Testis (tissue), 5 donors: ENCODE measurements at regions of chr7 and their contacts with region 1.

Region 1: GRCh38 chr7:93601363-93601762 is 26.8 kb upstream of the CALCR start:
- DNase-seq: no peak
- H3K4me3 ChIP-seq: no peak overlapping the region
- H3K27ac ChIP-seq: no peak overlapping the region
- H3K4me1 ChIP-seq: no peaks in the 10 kb centered on the region
- H3K27me3 ChIP-seq: no peaks in the 10 kb centered on the region
- CTCF ChIP-seq: no peak
- POLR2A ChIP-seq: no peak

Region 2: GRCh38 chr7:92456236-92456635 is 1145.1 kb before region 1 on chr7:
- intact Hi-C with region 1: loop called (anchors 10 kb)
- DNase-seq: no peak
- H3K4me3 ChIP-seq: no peak overlapping the region
- H3K27ac ChIP-seq: no peak overlapping the region
- H3K4me1 ChIP-seq: peaks cover 4% of the 10 kb centered on the region
- H3K27me3 ChIP-seq: no peaks in the 10 kb centered on the region
- CTCF ChIP-seq: no peak
- POLR2A ChIP-seq: no peak